Mammary epithelial cell (primary cell): ENCODE measurements at regions of chr2 and their contacts with region 1.

Region 1: GRCh38 chr2:148644883-148645538 is 460 bp downstream of the EPC2 start:
- DNase-seq: peak; percentile 89
- H3K4me3 ChIP-seq: peak overlapping the region; percentile 64 to 91 (median 83)
- H3K27ac ChIP-seq: peak overlapping the region; percentile 82
- H3K4me1 ChIP-seq: peaks cover 14% of the 10 kb centered on the region
- H3K27me3 ChIP-seq: no peaks in the 10 kb centered on the region
- CTCF ChIP-seq: peak; percentile 6 to 44

Region 2: DNA sequence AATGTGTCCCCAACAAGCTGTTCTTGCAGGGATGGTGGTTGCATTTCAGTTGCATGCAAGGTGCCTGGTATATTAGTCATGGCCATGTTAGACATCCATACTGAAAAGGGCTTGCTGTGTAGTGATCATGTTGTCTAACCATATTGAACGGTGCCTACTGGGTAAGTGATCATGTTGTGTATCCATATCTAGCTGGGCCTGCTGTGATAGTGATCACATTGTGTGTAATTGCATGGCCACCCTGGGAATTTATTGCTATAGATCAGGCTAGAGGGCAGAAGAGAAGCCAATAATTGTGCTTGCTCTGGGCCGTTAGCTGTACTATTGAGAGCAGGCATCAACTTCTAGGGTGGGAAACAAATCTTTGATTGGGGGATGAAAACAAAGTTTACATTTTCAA is 10.3 kb before region 1 on chr2:
- CTCF ChIA-PET with region 1: interaction called, 17 read pairs
- dilution Hi-C with region 1: no loop called
- in situ Hi-C with region 1: no loop called
- intact Hi-C with region 1: no loop called
- DNase-seq: no peak
- H3K4me3 ChIP-seq: no peak overlapping the region
- H3K27ac ChIP-seq: no peak overlapping the region
- H3K4me1 ChIP-seq: no peaks in the 10 kb centered on the region
- H3K27me3 ChIP-seq: no peaks in the 10 kb centered on the region
- CTCF ChIP-seq: no peak

Region 3: GRCh38 chr2:148874868-148875341 is 229.9 kb after region 1 on chr2 and contains the start of gene KIF5C:
- CTCF ChIA-PET with region 1: no interaction called
- dilution Hi-C with region 1: no loop called
- in situ Hi-C with region 1: no loop called
- intact Hi-C with region 1: loop called (anchors 5 kb)
- DNase-seq: peak; percentile 74
- H3K4me3 ChIP-seq: peak within 1 kb of the TSS in 2 of 3 experiments; percentile 7 to 21
- H3K27ac ChIP-seq: no peak within 1 kb of the TSS
- H3K4me1 ChIP-seq: no peaks in the 10 kb centered on the region
- H3K27me3 ChIP-seq: peaks cover 24% of the 10 kb centered on the region
- CTCF ChIP-seq: no peak
- total RNA-seq, gene KIF5C: under 0.01 TPM in 1 of 2 donors, not detected in the other

Region 4: GRCh38 chr2:148989882-148990493 is 345.0 kb after region 1 on chr2:
- CTCF ChIA-PET with region 1: no interaction called
- dilution Hi-C with region 1: no loop called
- in situ Hi-C with region 1: no loop called
- intact Hi-C with region 1: loop called (anchors 1 kb)
- DNase-seq: peak; percentile 53
- H3K4me3 ChIP-seq: no peak overlapping the region
- H3K27ac ChIP-seq: no peak overlapping the region
- H3K4me1 ChIP-seq: no peaks in the 10 kb centered on the region
- H3K27me3 ChIP-seq: no peaks in the 10 kb centered on the region
- CTCF ChIP-seq: peak; percentile 66 to 80

Region 5: DNA sequence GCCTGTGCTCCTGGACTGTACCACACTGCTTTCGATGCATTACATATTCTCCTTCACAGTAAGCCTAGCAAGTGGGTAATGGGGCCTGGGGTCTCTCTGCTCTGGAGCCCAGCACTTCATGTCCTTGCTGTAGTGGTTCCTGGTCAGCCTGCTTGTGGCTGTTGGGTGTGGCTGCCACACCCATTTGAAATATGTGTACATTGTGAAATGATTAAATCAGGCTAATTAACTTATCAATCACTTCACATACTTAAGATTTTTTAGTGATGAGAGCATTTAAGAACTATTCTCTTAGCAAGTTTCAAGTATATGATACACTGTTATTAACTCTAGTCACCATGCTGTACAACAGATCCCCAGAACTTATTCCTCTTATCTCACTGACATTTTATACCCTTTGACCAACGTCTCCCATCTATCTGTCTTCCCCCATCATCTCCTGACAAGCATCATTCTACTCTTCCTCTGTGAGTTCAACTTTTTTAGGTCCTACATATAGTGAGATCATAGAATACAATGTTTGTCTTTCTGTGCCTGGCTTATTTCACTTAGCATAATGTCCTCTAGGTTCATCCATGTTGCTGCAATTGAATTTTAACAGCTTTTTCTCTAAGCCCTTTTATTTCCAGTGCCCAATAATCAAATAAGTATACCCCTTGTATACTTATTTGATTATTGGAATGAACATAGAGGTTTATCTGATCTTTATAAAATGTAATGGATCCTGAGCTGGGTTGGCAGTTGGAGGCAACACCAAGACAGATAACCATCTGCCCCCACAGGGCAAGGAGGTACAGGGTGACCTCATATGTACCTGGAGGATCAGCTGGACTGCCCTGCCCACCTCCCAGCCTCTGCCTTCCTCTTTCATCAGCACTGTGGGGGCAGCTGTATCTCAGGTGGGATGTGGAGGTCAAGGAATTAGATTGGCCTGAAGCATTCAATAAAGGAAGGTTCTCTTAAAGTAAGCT is 777.6 kb after region 1 on chr2:
- CTCF ChIA-PET with region 1: no interaction called
- dilution Hi-C with region 1: no loop called
- in situ Hi-C with region 1: no loop called
- intact Hi-C with region 1: loop called (anchors 5 kb)
- DNase-seq: peak; percentile 32
- H3K4me3 ChIP-seq: no peak overlapping the region
- H3K27ac ChIP-seq: peak overlapping the region; percentile 36
- H3K4me1 ChIP-seq: peaks cover 16% of the 10 kb centered on the region
- H3K27me3 ChIP-seq: no peaks in the 10 kb centered on the region
- CTCF ChIP-seq: no peak

Region 6: DNA sequence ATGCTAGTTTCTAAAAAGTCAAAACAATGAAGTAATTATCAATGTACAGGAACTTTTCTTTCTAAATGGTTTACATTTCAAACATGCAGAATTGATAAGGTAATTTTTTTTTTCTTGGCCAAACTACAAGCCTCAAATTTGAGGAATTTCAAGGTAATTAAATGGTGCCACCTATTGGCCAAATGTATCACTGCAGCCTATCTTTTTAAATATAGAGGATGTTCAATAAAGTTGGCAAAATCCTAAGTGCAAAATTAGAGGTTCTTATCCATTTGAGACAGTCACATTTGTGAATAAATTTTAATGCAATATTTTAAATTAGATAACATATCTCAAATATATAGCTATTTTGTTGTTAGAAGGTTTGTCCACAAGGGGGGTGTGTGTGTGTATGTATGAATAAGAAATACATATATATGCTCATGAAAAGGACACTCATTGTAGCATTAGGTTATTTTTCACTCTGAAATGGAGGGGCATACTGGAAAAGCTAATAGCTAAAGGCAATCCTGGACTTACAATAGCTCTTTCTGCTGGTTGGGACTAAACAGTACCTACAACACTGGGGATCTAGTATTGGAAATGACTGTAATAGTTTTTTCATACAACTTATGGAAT is 916.4 kb after region 1 on chr2:
- CTCF ChIA-PET with region 1: no interaction called
- dilution Hi-C with region 1: no loop called
- in situ Hi-C with region 1: no loop called
- intact Hi-C with region 1: loop called (anchors 10 kb)
- DNase-seq: peak; percentile 8
- H3K4me3 ChIP-seq: no peak overlapping the region
- H3K27ac ChIP-seq: no peak overlapping the region
- H3K4me1 ChIP-seq: no peaks in the 10 kb centered on the region
- H3K27me3 ChIP-seq: no peaks in the 10 kb centered on the region
- CTCF ChIP-seq: peak; percentile 66 to 84

Region 7: GRCh38 chr2:149767516-149767974 is 1122.5 kb after region 1 on chr2:
- CTCF ChIA-PET with region 1: interaction called, 31 read pairs
- dilution Hi-C with region 1: no loop called
- in situ Hi-C with region 1: no loop called
- intact Hi-C with region 1: no loop called
- DNase-seq: peak; percentile 58
- H3K4me3 ChIP-seq: no peak overlapping the region
- H3K27ac ChIP-seq: peak overlapping the region; percentile 37
- H3K4me1 ChIP-seq: peaks cover 12% of the 10 kb centered on the region
- H3K27me3 ChIP-seq: no peaks in the 10 kb centered on the region
- CTCF ChIP-seq: no peak